Sigmoid colon (tissue), 7 donors: ENCODE measurements at regions of chr3 and their contacts with region 1.

Region 1: DNA sequence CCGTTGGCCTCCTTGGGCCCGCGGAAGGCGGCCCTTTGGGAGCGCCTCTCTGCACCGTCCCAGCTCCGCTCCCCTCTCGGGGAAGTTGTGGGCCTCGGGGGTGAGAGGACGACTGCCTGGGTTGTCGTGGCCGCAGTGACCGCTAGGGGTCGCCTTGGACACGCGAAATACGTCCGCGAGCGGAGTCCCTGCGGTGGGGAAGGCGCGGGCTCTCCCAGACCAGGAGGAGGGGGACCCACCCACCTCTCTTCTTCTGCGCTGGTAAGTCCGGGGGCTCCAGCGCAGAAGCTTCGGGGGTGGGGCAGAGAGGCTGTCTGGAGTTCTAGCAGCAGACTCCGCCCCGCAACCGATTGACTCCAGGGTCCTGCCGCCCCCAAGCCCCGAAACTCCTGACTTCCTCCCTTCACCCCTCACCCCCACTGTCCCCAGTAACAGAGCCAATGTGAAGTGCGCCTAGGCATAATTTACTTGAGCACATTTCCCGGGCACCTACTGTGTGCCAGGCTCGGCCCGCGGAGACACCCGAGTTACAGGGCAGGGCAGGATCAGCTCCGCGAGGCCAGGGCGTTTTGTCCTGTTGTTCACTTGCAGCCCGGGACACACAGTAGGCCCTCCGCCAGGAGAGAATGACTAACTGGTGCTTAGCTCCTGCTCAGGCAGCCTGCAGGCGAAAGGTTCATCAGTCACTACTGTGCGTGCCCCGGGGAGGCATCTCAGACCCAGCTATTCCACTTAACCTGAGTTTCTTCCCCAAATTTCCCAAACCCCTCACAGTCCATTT is 32.8 kb downstream of the DNASE1L3 start:
- DNase-seq: peak; percentile 95
- H3K4me3 ChIP-seq: peak overlapping the region; percentile 32 to 52 (median 46)
- H3K27ac ChIP-seq: peak overlapping the region in 2 of 4 donors; percentile 5 to 61
- H3K4me1 ChIP-seq: peaks cover 0 to 46% (median 39%) of the 10 kb centered on the region in 4 donors
- H3K27me3 ChIP-seq: no peaks in the 10 kb centered on the region
- CTCF ChIP-seq: peak; percentile 87 to 94 (median 91)
- EP300 ChIP-seq: no peak
- POLR2A ChIP-seq: no peak

Region 2: DNA sequence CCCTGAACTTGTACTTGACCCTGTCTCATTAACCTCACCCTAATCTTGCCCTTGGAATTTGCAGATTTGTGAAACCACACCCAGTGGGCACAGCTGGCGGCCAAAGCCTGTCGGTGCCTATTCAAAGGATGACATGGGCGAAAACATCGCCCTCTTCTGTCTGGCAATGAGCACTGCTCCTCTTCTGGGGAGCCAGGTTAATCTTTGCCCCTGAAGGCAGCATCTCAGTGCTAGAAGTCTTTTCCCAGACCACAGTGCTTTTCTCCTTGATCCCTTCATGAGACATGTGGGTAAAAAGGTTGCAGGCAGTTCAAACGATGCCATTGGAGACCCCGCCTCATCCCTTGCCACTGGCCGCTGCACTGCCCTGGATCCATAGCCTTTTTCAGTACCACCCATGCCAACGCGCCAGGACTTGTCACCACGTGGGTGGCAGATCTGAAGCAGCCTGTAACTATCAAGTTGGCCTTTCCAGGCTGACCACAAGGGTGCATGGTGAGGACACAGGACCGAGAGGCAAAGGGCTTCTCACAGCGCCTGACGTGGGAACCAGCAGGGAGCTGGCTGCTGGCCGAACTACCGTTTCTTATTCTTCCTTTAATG is 39.4 kb after region 1 on chr3:
- intact Hi-C with region 1: loop called (anchors 5 kb)
- DNase-seq: peak; percentile 82
- H3K4me3 ChIP-seq: no peak overlapping the region
- H3K27ac ChIP-seq: peak overlapping the region in 1 of 4 donors; percentile 27
- H3K4me1 ChIP-seq: peaks cover 0 to 11% (median 7%) of the 10 kb centered on the region in 4 donors
- H3K27me3 ChIP-seq: no peaks in the 10 kb centered on the region
- CTCF ChIP-seq: peak; percentile 50 to 77 (median 64)
- EP300 ChIP-seq: no peak
- POLR2A ChIP-seq: no peak